Thyroid gland (tissue), 4 donors: ENCODE measurements at regions of chr19 and their contacts with region 1.

Region 1: GRCh38 chr19:36172852-36173251 is 20.6 kb upstream of the COX7A1 start:
- DNase-seq: no peak
- H3K4me3 ChIP-seq: no peak overlapping the region
- H3K27ac ChIP-seq: no peak overlapping the region
- H3K4me1 ChIP-seq: peaks cover 6 to 10% of the 10 kb centered on the region in 2 donors
- H3K27me3 ChIP-seq: no peaks in the 10 kb centered on the region
- CTCF ChIP-seq: no peak
- POLR2A ChIP-seq: no peak

Region 2: DNA sequence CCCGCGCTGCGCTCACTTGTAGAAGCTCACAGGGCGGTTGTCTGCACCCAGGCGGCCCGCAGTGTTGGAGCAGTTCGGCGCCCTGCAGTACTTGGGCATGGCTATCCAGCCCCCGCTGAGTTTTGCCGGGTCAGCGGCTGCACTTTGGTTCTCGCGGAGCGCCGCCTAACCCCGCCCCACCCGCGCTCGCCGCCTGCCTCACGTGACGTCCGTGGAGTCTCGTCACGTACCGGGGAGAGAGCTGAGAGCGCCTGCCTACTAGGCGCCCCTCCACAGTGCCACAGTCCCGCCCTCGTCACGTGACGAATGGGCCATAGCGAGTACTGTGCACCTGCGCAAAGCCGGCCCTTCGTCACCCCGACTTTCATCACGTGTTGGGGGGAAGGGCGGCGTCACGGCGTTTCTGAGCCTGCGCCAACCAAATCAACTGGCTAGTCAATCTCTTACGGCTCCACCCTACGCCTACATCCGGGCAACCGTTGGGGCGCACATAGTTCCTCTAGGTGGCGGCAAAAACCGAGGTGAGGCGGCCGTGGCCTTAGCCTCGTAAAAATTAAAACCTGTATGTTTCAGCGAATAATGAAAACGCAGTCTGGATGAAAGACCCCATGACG is 118.6 kb before region 1 on chr19 and contains the start of gene THAP8:
- intact Hi-C with region 1: no loop called
- DNase-seq: peak; percentile 100
- H3K4me3 ChIP-seq: peak within 1 kb of the TSS; percentile 39 to 73 (median 50)
- H3K27ac ChIP-seq: peak within 1 kb of the TSS; percentile 89 to 96 (median 91)
- H3K4me1 ChIP-seq: peaks cover 6 to 8% of the 10 kb centered on the region in 2 donors
- H3K27me3 ChIP-seq: no peaks in the 10 kb centered on the region
- CTCF ChIP-seq: peak in 5 of 6 experiments; percentile 13 to 74 (median 69)
- POLR2A ChIP-seq: peak; percentile 39 to 80
- total RNA-seq, gene THAP8: 5.0 to 14.2 (median 10.1) TPM

Region 3: DNA sequence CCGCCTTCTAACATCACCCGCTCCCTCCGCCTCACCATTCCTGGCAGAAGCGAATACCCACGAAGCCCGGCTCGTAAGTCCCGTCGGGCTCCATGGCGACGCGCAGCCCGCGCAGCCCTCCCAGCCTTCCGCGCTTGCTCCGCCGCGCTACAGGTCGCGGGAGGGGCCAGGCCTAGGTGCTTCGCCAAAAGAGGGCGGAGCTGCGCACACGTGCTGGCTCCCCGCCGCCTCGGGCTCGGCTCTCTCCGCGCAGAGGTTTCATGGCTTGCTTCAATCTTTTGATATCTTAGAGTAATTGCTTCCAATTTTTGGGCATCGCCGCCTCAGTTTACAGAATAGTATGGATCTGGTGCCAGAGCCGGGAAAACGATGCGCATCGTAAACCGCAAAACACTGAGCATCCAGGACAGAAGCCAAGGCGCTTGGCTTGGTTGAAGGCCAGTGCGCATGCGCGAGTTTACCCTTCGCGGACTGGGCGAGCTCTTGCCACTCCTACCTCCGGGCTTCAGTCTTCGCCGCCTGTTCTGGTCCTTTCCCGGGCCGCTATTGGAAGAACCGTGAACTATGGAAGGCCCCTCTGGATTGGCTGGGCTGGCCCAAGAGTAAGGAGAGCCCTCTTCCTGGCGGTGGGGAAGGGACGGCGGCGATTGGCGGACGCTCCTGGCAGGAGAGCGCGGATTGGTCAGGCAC is 57.9 kb before region 1 on chr19 and contains the start of gene POLR2I:
- intact Hi-C with region 1: no loop called
- DNase-seq: peak; percentile 99
- H3K4me3 ChIP-seq: peak within 1 kb of the TSS; percentile 13 to 87 (median 60)
- H3K27ac ChIP-seq: peak within 1 kb of the TSS; percentile 24 to 84 (median 68)
- H3K4me1 ChIP-seq: peaks cover 15 to 16% of the 10 kb centered on the region in 2 donors
- H3K27me3 ChIP-seq: no peaks in the 10 kb centered on the region
- CTCF ChIP-seq: no peak
- POLR2A ChIP-seq: peak in 1 of 2 donors; percentile 71
- total RNA-seq, gene POLR2I: 53.7 to 101 (median 76.9) TPM

Region 4: GRCh38 chr19:36132489-36132891 is 40.4 kb before region 1 on chr19:
- intact Hi-C with region 1: loop called (anchors 2 kb)
- DNase-seq: no peak
- H3K4me3 ChIP-seq: no peak overlapping the region
- H3K27ac ChIP-seq: no peak overlapping the region
- H3K4me1 ChIP-seq: peaks cover 5 to 37% of the 10 kb centered on the region in 2 donors
- H3K27me3 ChIP-seq: no peaks in the 10 kb centered on the region
- CTCF ChIP-seq: no peak
- POLR2A ChIP-seq: no peak